Mammary epithelial cell (primary cell): ENCODE measurements at regions of chr6 and their contacts with region 1.

Region 1: DNA sequence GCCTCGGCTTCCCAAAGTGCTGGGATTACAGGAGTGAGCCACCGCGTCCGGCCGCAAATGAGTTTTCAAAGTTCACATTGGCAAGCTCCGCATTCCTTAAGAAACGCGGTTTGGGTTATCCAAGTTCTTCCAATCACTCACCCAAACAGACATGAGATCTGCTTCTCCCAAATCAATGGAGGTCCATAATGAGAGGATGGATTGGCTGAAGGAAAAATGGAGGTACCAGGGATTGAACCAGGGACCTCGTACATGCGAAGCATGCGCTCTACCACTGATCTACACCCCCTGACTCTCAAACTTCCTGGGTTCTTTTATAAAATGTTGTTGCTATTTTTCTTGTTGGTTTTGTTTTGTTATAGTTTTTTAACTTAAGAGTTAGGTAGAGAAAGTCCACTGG is 170.0 kb downstream of the GPX5 start:
- DNase-seq: peak; percentile 64
- H3K4me3 ChIP-seq: no peak overlapping the region
- H3K27ac ChIP-seq: no peak overlapping the region
- H3K4me1 ChIP-seq: no peaks in the 10 kb centered on the region
- H3K27me3 ChIP-seq: no peaks in the 10 kb centered on the region
- CTCF ChIP-seq: no peak

Region 2: GRCh38 chr6:28413681-28414080 is 282.0 kb before region 1 on chr6:
- CTCF ChIA-PET with region 1: no interaction called
- dilution Hi-C with region 1: no loop called
- in situ Hi-C with region 1: no loop called
- intact Hi-C with region 1: no loop called
- DNase-seq: no peak
- H3K4me3 ChIP-seq: no peak overlapping the region
- H3K27ac ChIP-seq: no peak overlapping the region
- H3K4me1 ChIP-seq: no peaks in the 10 kb centered on the region
- H3K27me3 ChIP-seq: no peaks in the 10 kb centered on the region
- CTCF ChIP-seq: no peak

Region 3: GRCh38 chr6:28710466-28711191 is 14.9 kb after region 1 on chr6:
- CTCF ChIA-PET with region 1: no interaction called
- dilution Hi-C with region 1: no loop called
- in situ Hi-C with region 1: no loop called
- intact Hi-C with region 1: loop called (anchors 2 kb)
- DNase-seq: peak; percentile 67
- H3K4me3 ChIP-seq: no peak overlapping the region
- H3K27ac ChIP-seq: no peak overlapping the region
- H3K4me1 ChIP-seq: peaks cover 4% of the 10 kb centered on the region
- H3K27me3 ChIP-seq: no peaks in the 10 kb centered on the region
- CTCF ChIP-seq: no peak

Region 4: DNA sequence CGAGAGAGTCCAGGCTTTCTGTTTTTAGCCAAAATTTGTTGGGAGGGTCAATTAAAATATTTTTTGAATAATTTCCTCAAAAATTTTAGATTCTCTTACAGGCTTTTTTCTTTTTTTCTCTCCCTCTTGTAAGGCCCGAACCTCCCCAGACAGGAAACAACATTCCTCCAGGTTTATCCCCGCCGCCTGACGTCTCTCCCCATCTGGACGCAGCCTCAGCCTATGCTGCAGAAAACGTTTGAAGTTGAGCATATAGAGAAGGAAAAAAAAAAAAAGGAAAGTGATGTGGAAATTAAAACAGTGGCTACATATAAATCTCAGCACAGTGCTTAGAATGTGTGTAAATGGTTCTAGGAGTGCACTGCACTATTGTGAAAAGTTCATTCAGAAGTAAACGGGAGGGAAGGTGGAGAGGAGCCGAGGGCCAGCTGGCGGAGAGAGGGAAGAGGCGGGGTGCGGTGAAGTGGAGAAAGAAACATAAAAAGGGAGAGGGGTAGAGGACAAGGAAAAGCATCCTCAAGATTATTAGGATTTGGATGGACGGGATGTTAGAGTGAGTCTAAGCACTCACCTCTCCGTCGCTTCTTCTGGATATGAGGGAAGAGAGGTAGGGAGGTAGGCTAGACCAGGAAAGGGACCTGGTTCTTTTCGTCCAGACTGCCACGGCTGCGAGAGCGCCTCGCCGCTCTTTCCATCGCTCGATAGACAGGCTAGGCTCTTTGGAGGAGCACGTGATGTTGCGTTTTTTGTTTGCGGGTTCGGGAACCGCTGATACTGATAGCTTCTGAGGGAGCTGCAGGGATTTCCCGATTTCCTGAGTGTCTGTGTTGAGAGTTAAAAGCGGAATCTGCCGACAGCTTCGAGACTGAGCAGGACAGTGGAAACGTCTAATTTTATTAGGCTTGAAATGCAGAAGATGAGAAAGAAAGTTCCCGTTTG is 129.3 kb after region 1 on chr6:
- CTCF ChIA-PET with region 1: no interaction called
- dilution Hi-C with region 1: no loop called
- in situ Hi-C with region 1: no loop called
- intact Hi-C with region 1: no loop called
- DNase-seq: no peak
- H3K4me3 ChIP-seq: peak overlapping the region; percentile 28 to 40 (median 37)
- H3K27ac ChIP-seq: no peak overlapping the region
- H3K4me1 ChIP-seq: no peaks in the 10 kb centered on the region
- H3K27me3 ChIP-seq: peaks cover 9% of the 10 kb centered on the region
- CTCF ChIP-seq: no peak